BJ (cell line): ENCODE measurements at regions of chr10 and their contacts with region 1.

Region 1: GRCh38 chr10:71696628-71697326 is 22.8 kb downstream of the C10orf105 start:
- DNase-seq: no peak
- H3K4me3 ChIP-seq: no peak overlapping the region
- H3K27me3 ChIP-seq: 0 out of 2 replicates have a peak, but pooled peaks cover 4% of the 10 kb centered on the region
- CTCF ChIP-seq: peak; percentile 94

Region 2: DNA sequence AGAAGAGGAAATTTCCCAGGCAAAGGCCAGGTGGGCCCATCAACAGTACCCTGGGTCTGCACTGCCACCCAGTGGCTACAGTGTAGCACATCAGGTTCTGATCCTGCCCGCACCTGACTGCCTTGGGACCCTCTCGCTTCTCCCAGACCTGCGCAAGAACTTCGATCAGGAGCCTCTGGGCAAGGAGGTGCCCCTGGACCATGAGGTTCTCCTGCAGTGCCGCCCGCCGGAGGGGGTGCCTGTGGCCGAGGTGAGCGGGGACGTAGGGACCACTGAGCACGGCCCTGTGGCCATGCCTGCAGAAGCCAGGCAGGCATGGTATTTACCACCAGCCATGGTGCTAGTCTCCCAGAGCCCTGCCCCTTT is 411.6 kb before region 1 on chr10:
- CTCF ChIA-PET with region 1: no interaction called
- POLR2A ChIA-PET with region 1: no interaction called
- DNase-seq: no peak
- H3K4me3 ChIP-seq: no peak overlapping the region
- H3K27me3 ChIP-seq: no peaks in the 10 kb centered on the region
- CTCF ChIP-seq: peak; percentile 67

Region 3: DNA sequence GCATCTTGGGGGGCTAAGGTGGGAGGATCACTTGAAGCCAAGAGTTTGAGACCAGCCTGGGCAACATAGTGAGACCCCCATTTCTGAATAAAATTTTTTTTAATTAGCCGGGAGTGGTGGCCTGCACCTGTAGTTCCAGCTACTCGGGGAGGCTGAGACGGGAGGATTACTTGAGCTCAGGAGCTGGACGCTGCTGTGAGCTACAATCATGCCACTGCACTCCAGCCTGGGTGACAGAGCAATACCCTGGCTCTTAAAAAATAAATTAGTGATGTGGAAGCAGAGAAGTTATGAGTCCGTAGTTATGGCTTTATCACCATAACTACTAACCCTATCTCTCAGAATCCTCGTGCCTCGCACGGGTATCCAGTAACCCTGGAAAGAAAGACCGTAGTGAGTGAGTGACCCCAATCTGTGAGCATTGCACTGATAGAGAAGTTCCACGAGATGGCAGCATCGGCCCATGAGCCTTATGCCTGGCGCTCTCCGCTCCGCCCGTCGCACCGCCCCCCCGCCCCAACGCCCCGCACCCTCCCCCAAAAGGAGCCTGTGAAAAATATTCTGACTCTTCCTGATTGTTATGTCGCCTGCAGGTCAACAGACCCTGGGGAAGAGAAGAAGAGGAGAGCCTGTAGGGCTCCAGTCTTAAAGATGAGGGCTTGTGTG is 382.6 kb before region 1 on chr10:
- CTCF ChIA-PET with region 1: interaction called, 23 read pairs
- POLR2A ChIA-PET with region 1: no interaction called
- DNase-seq: no peak
- H3K4me3 ChIP-seq: no peak overlapping the region
- H3K27me3 ChIP-seq: no peaks in the 10 kb centered on the region
- CTCF ChIP-seq: peak; percentile 86

Region 4: GRCh38 chr10:71684356-71685173 is 12.2 kb before region 1 on chr10:
- CTCF ChIA-PET with region 1: interaction called, 21 read pairs
- POLR2A ChIA-PET with region 1: no interaction called
- DNase-seq: no peak
- H3K4me3 ChIP-seq: no peak overlapping the region
- H3K27me3 ChIP-seq: peaks cover 12% of the 10 kb centered on the region
- CTCF ChIP-seq: no peak

Region 5: GRCh38 chr10:71713135-71714030 is 16.6 kb after region 1 on chr10:
- CTCF ChIA-PET with region 1: interaction called, 93 read pairs
- POLR2A ChIA-PET with region 1: no interaction called
- DNase-seq: peak; percentile 73
- H3K4me3 ChIP-seq: no peak overlapping the region
- H3K27me3 ChIP-seq: no peaks in the 10 kb centered on the region
- CTCF ChIP-seq: peak; percentile 64

Region 6: DNA sequence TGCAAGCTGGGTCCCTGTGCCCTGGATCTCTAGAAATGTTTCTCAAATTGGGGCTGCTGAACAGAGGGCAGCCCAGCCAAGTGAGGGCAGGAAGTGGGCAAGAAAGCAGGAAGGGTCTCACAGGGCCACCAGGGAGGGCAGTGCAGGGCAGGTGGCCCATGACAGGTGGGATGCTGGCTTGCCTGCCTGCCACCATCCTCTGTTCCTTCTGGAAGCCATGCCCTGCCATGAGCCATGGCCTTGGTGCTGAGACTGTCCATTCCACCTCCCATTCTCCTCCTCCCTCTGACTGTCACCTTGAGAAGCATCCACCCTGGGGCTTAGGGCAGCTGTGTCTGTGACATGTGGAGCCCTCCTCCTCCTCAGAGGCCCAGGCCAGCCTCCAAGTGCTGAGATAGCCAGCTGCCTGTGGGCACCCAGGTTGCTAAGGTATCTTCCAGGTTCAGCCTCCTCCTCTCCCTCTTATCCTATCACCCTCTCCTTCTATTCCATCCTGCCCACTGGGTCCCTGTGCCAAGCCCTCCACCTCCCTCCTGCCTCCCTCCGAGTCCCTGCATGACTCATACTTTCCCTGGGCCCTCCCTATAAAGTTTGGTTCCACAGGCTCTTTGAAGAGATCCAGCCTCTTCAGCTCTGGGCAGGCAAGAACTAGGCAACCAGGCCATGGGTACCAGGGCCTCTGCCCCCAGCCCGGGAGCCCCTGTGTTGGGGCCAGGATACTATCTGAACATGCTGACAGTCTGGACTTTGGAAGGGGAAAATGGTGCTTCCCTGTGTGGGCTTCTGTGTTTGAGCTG is 75.2 kb after region 1 on chr10:
- CTCF ChIA-PET with region 1: interaction called, 50 read pairs
- POLR2A ChIA-PET with region 1: no interaction called
- DNase-seq: peak; percentile 39
- H3K4me3 ChIP-seq: peak overlapping the region; percentile 85
- H3K27me3 ChIP-seq: no peaks in the 10 kb centered on the region
- CTCF ChIP-seq: no peak

Region 7: DNA sequence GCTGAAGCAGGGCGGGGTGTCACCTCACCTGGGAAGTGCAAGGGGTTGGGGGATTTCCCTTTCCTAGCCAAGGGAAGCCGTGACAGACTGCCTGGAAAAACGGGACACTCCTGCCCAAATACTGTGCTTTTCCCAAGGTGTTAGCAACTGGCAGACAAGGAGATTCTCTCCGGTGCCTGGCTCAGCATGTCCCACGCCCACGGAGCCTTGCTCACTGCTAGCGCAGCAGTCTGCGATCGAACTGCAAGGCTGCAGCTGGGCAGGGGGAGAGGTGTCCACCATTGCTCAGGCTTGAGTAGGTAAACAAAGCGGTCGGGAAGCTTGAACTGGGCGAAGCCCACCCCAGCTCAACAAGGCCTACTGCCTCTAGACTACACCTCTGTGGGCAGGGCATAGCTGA is 738.8 kb after region 1 on chr10:
- CTCF ChIA-PET with region 1: no interaction called
- POLR2A ChIA-PET with region 1: no interaction called
- DNase-seq: no peak
- H3K4me3 ChIP-seq: no peak overlapping the region
- H3K27me3 ChIP-seq: no peaks in the 10 kb centered on the region
- CTCF ChIP-seq: no peak